Vagina (tissue), 2 donors: ENCODE measurements at regions of chr1 and their contacts with region 1.

Region 1: GRCh38 chr1:201895913-201896807 is 7.5 kb downstream of the SHISA4 start:
- DNase-seq: no peak
- H3K4me3 ChIP-seq: no peak overlapping the region
- H3K27ac ChIP-seq: peak overlapping the region; percentile 70
- H3K4me1 ChIP-seq: peaks cover 18% of the 10 kb centered on the region
- H3K27me3 ChIP-seq: no peaks in the 10 kb centered on the region
- CTCF ChIP-seq: peak; percentile 77 to 98 (median 93)
- POLR2A ChIP-seq: no peak

Region 2: DNA sequence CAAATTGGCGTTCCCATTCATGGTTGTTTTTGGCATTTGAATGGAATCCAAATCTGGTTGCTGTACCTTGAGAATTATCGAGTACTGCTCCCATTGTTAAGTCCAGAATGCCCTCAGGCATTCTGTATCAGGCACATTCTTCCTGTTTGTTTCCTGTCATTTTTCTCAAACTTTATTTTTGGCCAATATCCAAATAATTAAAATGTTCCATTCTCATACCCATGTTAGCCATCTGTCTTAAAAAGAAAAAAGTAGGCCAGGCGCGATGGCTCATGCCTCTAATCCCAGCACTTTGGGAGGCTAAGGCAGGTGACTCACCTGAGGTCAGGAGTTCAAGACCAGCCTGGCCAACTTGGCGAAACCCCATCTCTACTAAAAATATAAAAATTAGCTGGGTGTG is 36.7 kb before region 1 on chr1:
- intact Hi-C with region 1: no loop called
- DNase-seq: no peak
- H3K4me3 ChIP-seq: no peak overlapping the region
- H3K27ac ChIP-seq: no peak overlapping the region
- H3K4me1 ChIP-seq: no peaks in the 10 kb centered on the region
- H3K27me3 ChIP-seq: no peaks in the 10 kb centered on the region
- CTCF ChIP-seq: no peak
- POLR2A ChIP-seq: no peak

Region 3: GRCh38 chr1:201970334-201971159 is 74.4 kb after region 1 on chr1:
- intact Hi-C with region 1: loop called (anchors 5 kb)
- DNase-seq: no peak
- H3K4me3 ChIP-seq: no peak overlapping the region
- H3K27ac ChIP-seq: no peak overlapping the region
- H3K4me1 ChIP-seq: no peaks in the 10 kb centered on the region
- H3K27me3 ChIP-seq: no peaks in the 10 kb centered on the region
- CTCF ChIP-seq: no peak
- POLR2A ChIP-seq: no peak